Adrenal gland (tissue), 19 donors: ENCODE measurements at regions of chr1 and their contacts with region 1.

Region 1: DNA sequence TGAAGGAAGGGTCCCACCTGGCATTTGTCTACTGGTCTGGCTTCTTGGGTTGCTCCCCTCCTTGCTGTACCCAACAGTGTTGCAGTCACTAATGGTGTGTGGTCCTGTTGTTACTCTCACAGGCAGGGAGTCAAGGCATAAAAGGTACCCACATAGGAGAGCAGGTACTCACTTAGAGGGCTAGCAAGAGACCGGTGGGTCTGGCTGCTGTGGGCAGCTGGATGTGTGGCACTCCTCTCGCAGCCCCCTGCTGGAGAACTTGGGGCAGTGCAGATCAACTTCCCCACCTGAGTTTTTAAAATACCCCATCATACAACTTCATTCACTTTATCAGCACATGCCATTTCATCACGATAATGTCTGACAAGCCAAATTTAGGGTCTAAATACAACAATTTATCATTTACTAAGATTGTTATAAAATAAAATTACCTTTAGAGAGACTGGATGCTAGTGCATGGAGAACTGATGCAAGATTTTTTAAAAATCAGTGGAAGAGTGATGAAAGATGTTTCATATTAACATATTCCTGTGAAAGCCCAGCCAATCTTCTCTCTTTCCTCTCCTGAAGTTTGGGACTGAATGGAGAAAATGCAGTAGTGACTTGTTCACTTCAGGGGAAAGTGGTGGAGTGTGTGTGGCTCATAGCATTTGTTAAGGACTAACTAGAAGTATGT is 42.8 kb downstream of the ACP6 start:
- DNase-seq: peak; percentile 41 to 72 (median 60)
- H3K4me3 ChIP-seq: no peak overlapping the region
- H3K27ac ChIP-seq: no peak overlapping the region
- H3K4me1 ChIP-seq: peaks cover 5 to 10% of the 10 kb centered on the region in 2 donors
- H3K27me3 ChIP-seq: no peaks in the 10 kb centered on the region
- CTCF ChIP-seq: peak; percentile 62 to 92 (median 80)
- POLR2A ChIP-seq: no peak

Region 2: GRCh38 chr1:147494998-147495580 is 132.5 kb before region 1 on chr1:
- intact Hi-C with region 1: loop called (anchors 5 kb)
- DNase-seq: peak; percentile 76 to 91 (median 85)
- H3K4me3 ChIP-seq: no peak overlapping the region
- H3K27ac ChIP-seq: no peak overlapping the region
- H3K4me1 ChIP-seq: peaks cover 3 to 6% of the 10 kb centered on the region in 2 donors
- H3K27me3 ChIP-seq: no peaks in the 10 kb centered on the region
- CTCF ChIP-seq: peak; percentile 89 to 96 (median 96)
- POLR2A ChIP-seq: no peak